ENCODE measurements at regions of chr3 and their contacts with region 1.

Region 1: GRCh38 chr3:69682878-69683806 is 56.1 kb upstream of the MITF start:
- DNase-seq: no peak
- H3K4me3 ChIP-seq: no peak overlapping the region
- CTCF ChIP-seq: no peak
- POLR2A ChIP-seq: no peak

Region 2: DNA sequence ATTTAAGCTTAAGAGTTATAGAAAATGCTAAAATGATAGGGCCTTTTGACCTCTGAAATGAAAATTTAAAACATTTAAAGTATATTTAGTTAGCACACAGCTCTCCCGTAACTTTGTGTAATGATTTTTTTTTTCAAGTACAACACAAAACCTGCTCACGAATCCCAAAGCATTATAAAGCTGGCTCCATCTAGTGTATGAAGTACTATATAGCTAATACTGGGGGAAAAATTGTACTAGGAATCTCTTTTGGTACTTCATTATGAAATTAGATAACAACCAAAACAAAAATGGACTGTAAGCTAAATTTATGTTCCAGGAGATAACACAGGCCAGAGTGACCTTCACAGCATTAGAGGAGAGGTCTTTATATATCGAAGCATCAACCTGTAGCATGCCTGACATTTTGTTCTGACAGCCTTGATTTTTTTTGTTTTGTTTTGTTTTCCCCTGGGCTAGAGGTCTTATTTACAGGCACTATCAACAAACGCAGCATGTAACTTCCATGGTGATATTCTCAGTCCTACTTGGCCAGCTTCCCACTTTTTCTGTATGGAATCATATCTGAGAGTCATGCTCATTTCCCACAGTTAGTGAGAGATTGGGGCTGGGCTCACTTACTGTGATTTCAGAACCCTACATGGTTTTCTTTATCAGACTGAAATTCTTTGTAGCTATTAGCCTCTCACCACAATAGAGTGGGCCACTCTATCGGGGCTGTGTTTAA is 172.5 kb after region 1 on chr3:
- intact Hi-C with region 1: loop called (anchors 10 kb)
- DNase-seq: no peak
- H3K4me3 ChIP-seq: no peak overlapping the region
- CTCF ChIP-seq: no peak
- POLR2A ChIP-seq: no peak

Region 3: DNA sequence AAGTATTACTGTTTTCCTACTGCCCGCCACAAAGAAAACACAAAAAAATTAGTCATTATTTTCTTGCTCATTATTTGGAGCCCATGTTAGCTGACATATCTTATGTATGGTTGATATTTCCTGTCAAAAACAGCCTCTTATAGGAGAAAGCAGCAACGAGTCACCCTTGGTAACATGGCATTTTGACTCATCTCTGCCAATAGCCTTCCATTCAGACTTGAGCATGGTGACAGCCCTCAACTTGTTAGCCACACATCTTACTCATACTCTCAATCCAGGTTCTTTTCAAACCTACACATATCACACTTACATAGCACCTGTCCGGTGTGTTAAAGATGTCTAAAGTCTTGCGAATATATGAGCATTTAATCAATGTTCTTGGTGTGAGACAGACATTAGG is 206.9 kb after region 1 on chr3:
- intact Hi-C with region 1: no loop called
- DNase-seq: no peak
- H3K4me3 ChIP-seq: no peak overlapping the region
- CTCF ChIP-seq: no peak
- POLR2A ChIP-seq: no peak

Region 4: DNA sequence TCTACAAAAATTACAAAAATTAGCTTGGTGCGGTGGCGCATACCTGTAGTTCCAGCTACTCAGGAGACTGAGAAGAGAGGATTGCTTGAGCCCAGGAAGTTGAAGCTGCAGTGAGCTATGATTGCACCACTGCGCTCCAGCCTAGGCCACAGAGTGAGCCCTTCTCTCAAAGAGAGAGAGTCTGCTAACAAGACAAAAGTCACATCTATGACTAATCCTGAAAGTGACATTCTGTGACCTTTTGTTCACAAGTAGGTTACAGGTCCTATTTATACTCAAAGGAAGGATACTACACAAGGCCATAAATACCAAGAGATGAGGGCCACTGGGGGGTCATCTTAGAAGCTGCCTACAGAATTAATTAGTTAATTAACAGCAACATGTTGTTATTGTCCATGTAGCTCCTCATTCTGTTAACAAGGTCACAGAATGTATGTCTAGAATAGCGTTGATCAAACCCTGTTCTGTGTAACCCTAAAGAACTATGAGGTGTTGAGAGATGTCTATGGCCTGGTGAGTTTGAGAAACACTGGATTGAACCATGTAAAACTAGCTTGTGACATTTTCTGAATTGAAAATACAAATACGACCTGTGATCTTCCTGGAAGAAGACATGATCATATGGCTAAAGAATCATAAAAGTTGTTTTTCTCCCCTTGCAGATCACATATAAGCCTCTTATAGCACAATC is 413.4 kb after region 1 on chr3:
- intact Hi-C with region 1: no loop called
- DNase-seq: no peak
- H3K4me3 ChIP-seq: no peak overlapping the region
- CTCF ChIP-seq: no peak
- POLR2A ChIP-seq: no peak